ENCODE measurements at regions of chr15 and their contacts with region 1.

Region 1: DNA sequence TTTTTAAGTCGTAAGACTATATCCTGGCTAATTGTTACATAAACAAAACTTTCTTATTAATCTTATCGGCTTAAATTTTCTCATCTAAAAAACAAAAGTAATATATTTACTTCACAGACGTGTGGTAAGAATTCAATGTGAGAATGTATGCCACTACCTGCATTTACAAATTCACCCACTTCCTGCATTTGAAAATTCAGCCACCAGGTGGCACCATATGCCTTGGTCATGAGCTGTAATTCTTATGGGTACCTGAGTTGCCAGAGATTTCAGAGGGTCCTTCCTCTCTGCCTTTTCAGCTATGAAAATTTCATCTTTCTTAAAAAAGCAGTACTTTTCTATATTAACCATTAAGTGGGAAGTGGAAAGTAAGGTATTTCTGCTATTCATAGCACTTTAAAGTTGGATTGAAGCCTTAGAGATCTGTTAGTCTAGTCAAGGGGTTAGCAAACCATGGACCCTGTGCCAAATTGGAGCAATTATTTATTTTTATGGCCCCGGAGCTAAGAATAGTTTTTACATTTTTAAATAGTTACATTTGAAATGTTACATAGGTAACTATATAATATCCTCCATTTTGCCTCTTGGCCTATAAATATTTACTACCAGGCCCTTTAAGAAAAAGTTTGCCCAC is 127.8 kb downstream of the HCN4 start:
- DNase-seq: peak; percentile 45
- CTCF ChIP-seq: peak; percentile 84

Region 2: DNA sequence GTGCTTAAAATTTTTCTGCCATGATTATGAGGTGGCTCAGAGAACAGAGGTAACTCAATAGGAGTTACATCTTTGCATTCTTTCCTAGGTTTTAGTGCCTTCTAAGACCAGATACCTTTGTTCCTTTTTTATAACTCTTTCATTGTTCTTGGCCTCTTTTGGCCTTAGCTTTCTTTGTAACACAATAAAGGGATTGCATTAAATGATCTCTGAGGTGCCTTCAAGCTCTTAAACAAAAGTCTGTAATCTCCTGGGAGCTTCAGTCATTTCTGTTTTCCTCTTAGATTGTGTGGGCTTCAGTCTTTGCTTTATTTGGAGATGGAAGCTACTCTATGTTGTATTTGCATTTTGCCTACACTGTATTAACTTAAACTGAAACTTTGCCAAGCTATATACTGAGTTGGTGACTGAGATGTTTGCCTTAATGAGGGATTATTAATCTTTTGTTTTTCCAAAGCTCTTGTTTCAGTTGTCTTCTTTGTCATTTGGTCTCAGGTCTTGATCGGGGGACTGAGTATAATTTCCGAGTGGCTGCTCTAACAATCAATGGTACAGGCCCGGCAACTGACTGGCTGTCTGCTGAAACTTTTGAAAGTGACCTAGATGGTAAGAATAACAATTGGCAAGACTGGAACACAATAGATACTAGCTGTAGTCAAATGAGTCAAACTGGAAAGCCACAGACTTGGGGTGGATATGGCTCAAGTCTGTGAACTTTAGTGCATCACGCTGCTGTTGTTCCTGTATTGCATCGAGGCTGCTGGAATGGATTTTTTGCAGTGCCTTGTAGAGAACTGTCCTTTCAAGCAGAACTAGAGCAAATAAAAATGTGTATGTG is 17.5 kb after region 1 on chr15:
- CTCF ChIA-PET with region 1: interaction called, 23 read pairs
- POLR2A ChIA-PET with region 1: no interaction called
- DNase-seq: no peak
- CTCF ChIP-seq: no peak

Region 3: GRCh38 chr15:73291441-73291840 is 50.5 kb after region 1 on chr15:
- CTCF ChIA-PET with region 1: no interaction called
- POLR2A ChIA-PET with region 1: no interaction called
- DNase-seq: no peak
- CTCF ChIP-seq: no peak

Region 4: GRCh38 chr15:74291101-74292071 is 1050.4 kb after region 1 on chr15:
- CTCF ChIA-PET with region 1: no interaction called
- POLR2A ChIA-PET with region 1: no interaction called
- DNase-seq: peak; percentile 87
- CTCF ChIP-seq: no peak